H1 (cell line): ENCODE measurements at regions of chr13 and their contacts with region 1.

Region 1: DNA sequence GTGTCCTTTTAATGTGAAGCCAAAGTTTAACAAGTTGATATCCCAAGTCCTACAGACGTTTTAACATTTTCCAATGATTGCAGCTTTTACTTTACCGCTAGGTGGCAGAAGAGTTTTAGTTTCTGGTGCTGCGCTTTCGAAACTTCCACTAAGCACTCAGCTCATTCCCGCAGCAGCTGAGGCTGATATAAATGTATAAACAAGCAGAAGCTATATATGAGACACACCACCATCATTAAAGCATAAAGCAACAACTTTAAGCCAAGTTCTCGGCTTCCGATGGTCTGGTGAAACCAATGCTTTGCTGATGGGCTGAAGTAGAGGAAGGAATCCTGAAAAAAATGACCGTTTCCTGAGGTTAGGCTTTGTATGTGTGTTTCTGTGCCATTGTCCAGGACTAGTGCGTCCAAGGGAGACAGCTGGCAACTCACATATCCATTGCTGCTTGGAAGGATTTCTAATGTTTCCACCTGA is 753.9 kb downstream of the OLFM4 start:
- DNase-seq: peak in 1 of 2 experiments; percentile 47
- H3K4me3 ChIP-seq: peak overlapping the region in 1 of 4 experiments; percentile 19; a peak in 1 of 8 replicates
- H3K27ac ChIP-seq: no peak overlapping the region
- H3K4me1 ChIP-seq: peaks cover 0 to 3% (median 1%) of the 10 kb centered on the region in 4 experiments; a peak in 5 of 7 replicates
- H3K27me3 ChIP-seq: no peaks in the 10 kb centered on the region; a peak in 1 of 7 replicates
- CTCF ChIP-seq: peak in 2 of 3 experiments; percentile 71 to 74; a peak in 3 of 4 replicates
- EP300 ChIP-seq: no peak
- POLR2A ChIP-seq: no peak
- RAD21 ChIP-seq: peak; percentile 89 to 92

Region 2: DNA sequence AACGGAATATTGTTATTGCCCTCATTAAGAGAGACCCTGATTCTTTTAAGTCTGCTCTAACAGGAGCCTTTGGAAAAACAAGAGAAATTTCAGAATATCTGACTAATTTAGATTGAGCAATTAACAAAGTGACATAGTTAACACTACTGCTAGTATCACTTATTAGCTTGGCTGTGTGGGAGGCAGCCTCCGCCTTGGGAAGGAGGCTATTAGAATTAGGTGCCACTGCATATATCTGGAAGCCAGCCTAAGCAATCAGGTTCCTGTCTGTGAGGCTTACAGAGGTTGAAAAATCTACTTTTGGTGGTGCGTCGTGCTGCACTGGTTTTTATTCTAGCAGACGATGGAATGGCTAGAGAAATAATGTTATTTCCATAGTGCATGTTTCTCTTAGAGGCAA is 526.7 kb before region 1 on chr13:
- CTCF ChIA-PET with region 1: interaction called, 28 read pairs
- POLR2A ChIA-PET with region 1: no interaction called
- DNase-seq: no peak
- H3K4me3 ChIP-seq: no peak overlapping the region
- H3K27ac ChIP-seq: no peak overlapping the region
- H3K4me1 ChIP-seq: 0 out of 7 replicates have a peak, but pooled peaks cover 0 to 4% (median 0%) of the 10 kb centered on the region in 4 experiments
- H3K27me3 ChIP-seq: peaks cover 0 to 2% (median 0%) of the 10 kb centered on the region in 4 experiments; a peak in 2 of 7 replicates
- CTCF ChIP-seq: no peak
- EP300 ChIP-seq: no peak
- POLR2A ChIP-seq: no peak
- RAD21 ChIP-seq: no peak

Region 3: GRCh38 chr13:53807251-53807834 is 24.8 kb after region 1 on chr13:
- CTCF ChIA-PET with region 1: no interaction called
- POLR2A ChIA-PET with region 1: no interaction called
- DNase-seq: no peak
- H3K4me3 ChIP-seq: no peak overlapping the region
- H3K27ac ChIP-seq: no peak overlapping the region
- H3K4me1 ChIP-seq: no peaks in the 10 kb centered on the region
- H3K27me3 ChIP-seq: no peaks in the 10 kb centered on the region
- CTCF ChIP-seq: no peak
- EP300 ChIP-seq: no peak
- POLR2A ChIP-seq: no peak
- RAD21 ChIP-seq: no peak

Region 4: DNA sequence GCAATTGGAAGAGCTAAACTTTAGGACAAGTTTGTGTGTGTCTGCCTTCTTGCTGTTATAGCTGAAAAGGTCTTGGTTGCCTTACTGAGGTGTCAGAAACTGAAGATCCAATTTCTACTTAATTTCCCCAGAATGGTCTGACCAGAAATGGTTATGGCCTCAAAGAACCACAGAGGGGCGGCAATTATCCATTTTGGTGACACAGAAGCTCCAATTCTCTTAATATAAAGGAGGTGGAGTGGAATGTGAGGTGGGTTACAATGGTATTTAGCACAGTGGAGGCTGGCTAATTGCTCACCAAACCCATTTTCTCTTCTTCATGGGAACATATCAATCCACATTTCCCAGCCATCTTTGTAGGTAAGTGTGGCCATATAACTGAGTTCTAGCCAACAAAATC is 403.3 kb after region 1 on chr13:
- CTCF ChIA-PET with region 1: interaction called, 16 read pairs
- POLR2A ChIA-PET with region 1: no interaction called
- DNase-seq: peak in 1 of 2 experiments; percentile 49
- H3K4me3 ChIP-seq: no peak overlapping the region
- H3K27ac ChIP-seq: no peak overlapping the region
- H3K4me1 ChIP-seq: peaks cover 0 to 15% (median 8%) of the 10 kb centered on the region in 4 experiments; a peak in 2 of 7 replicates
- H3K27me3 ChIP-seq: no peaks in the 10 kb centered on the region
- CTCF ChIP-seq: peak in 2 of 3 experiments; percentile 73 to 78; a peak in 3 of 4 replicates
- EP300 ChIP-seq: no peak
- POLR2A ChIP-seq: no peak
- RAD21 ChIP-seq: peak; percentile 96 to 98